Heart right ventricle (tissue), 16 donors: ENCODE measurements at regions of chr11 and their contacts with region 1.

Region 1: GRCh38 chr11:2725368-2726300 is 25.8 kb upstream of the KCNQ1OT1 start:
- DNase-seq: peak; percentile 34 to 72
- ATAC-seq: peak in 7 of 8 donors; percentile 18 to 74 (median 60)
- H3K4me3 ChIP-seq: no peak overlapping the region
- H3K27ac ChIP-seq: no peak overlapping the region
- H3K4me1 ChIP-seq: peaks cover 0 to 28% (median 5%) of the 10 kb centered on the region in 9 donors
- H3K27me3 ChIP-seq: no peaks in the 10 kb centered on the region
- CTCF ChIP-seq: no peak

Region 2: DNA sequence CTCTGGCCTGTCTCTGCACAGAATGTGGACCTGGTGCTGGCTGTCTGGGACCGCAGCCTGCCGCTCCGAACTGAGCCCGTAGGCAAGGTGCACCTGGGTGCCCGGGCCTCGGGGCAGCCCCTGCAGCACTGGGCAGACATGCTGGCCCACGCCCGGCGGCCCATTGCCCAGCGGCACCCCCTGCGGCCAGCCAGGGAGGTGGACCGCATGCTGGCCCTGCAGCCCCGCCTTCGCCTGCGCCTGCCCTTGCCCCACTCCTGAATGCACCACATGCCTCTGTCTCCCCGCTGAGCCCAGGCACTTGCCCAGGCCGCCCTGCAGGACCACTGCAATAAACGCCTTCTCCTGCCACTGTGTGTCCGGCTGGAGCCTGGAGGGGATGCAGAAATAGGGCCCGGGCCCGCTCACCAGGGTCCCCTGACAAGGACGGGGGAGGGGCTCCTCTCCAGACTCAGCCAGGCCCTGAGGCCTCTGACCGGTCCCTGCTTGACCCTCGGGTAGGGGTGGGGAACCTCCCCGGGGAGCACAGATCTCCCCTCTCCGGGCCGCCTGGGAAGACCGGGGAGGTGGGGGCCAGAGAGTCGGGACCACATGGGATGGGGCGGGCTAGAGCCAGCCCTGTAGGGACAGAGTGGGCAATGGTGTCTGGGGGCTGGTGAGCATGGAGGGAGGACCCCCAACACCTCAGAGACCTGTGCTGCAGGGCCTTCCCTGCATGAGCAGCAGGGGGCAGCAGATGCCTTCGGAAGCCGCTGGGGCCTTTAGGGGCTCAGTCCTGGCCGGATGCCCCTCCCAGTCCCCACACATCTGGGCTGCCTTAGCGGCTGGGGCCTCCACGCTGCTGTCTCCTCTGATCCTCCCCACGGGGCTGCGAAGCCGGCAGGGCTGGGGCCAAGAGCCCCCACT is 888.2 kb before region 1 on chr11:
- intact Hi-C with region 1: no loop called
- DNase-seq: peak; percentile 71 to 78
- ATAC-seq: peak; percentile 29 to 71 (median 58)
- H3K4me3 ChIP-seq: no peak overlapping the region
- H3K27ac ChIP-seq: peak overlapping the region in 2 of 10 donors; percentile 34 to 60
- H3K4me1 ChIP-seq: peaks cover 6 to 41% (median 25%) of the 10 kb centered on the region in 9 donors
- H3K27me3 ChIP-seq: no peaks in the 10 kb centered on the region
- CTCF ChIP-seq: peak; percentile 89 to 97 (median 92)

Region 3: GRCh38 chr11:1852877-1853276 is 872.8 kb before region 1 on chr11 and contains the start of gene LSP1:
- intact Hi-C with region 1: loop called in 1 of 10 experiments (anchors 10 kb)
- DNase-seq: peak in 1 of 2 donors; percentile 25
- ATAC-seq: peak in 4 of 8 donors; percentile 13 to 28 (median 18)
- H3K4me3 ChIP-seq: peak within 1 kb of the TSS in 6 of 10 donors; percentile 5 to 62 (median 26)
- H3K27ac ChIP-seq: peak within 1 kb of the TSS in 3 of 10 donors; percentile 48 to 95 (median 76)
- H3K4me1 ChIP-seq: peaks cover 0 to 67% (median 0%) of the 10 kb centered on the region in 9 donors
- H3K27me3 ChIP-seq: no peaks in the 10 kb centered on the region
- CTCF ChIP-seq: no peak
- total RNA-seq, gene LSP1: 16.0 to 57.2 (median 20.8) TPM